ENCODE measurements at regions of chr17 and their contacts with region 1.

Region 1: GRCh38 chr17:80124351-80124981 is 22.5 kb downstream of the EIF4A3 start:
- DNase-seq: peak; percentile 62 to 74
- H3K4me3 ChIP-seq: no peak overlapping the region
- H3K4me3 Mint-ChIP-seq: no peak overlapping the region
- H3K27ac Mint-ChIP-seq: no peak overlapping the region
- H3K4me1 ChIP-seq: 0 out of 2 replicates have a peak, but pooled peaks cover 4% of the 10 kb centered on the region
- H3K4me1 Mint-ChIP-seq: peaks cover 7% of the 10 kb centered on the region
- H3K27me3 ChIP-seq: no peaks in the 10 kb centered on the region
- H3K27me3 Mint-ChIP-seq: no peaks in the 10 kb centered on the region
- CTCF ChIP-seq: peak; percentile 59 to 88

Region 2: DNA sequence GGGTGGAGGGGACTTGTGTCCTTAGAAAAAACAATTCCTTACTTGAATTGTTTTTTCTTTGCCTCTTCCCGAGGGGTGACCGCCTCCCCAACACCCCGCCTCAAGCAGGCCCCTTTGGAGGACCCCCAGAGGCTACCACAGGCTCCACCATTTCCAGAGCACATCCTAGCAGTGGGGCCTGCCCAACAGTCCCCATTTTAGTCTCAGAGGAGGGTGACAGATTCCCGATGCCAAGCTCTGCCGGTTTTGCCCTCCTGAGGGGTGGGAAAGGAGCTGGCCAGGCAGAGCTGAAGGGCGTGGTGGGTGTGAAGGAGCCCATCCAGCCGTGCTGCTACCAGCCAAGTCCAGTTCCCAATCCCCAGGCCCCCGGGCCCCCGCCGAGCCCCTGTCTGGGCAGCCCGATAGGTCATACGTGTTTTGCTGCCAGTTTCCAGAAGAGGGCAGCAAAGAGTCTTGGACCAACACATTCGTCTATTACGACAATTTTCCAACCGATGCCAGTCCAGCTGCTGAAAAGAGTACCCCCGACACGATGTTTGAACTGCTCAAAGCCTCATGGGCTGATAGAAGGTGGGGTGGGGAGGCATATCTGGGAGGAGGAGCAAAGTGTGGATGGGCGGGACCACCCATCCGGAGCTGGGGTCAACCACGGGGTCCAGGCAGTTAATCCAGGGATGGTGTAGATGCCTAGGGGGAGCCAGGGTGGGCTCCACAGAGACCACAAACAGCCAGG is 41.9 kb before region 1 on chr17:
- CTCF ChIA-PET with region 1: interaction called, 25 read pairs
- POLR2A ChIA-PET with region 1: no interaction called
- intact Hi-C with region 1: loop called (anchors 1 kb)
- DNase-seq: peak; percentile 74 to 82
- H3K4me3 ChIP-seq: no peak overlapping the region
- H3K4me3 Mint-ChIP-seq: no peak overlapping the region
- H3K27ac Mint-ChIP-seq: no peak overlapping the region
- H3K4me1 ChIP-seq: no peaks in the 10 kb centered on the region
- H3K4me1 Mint-ChIP-seq: peaks cover 9% of the 10 kb centered on the region
- H3K27me3 ChIP-seq: no peaks in the 10 kb centered on the region
- H3K27me3 Mint-ChIP-seq: peaks cover 3% of the 10 kb centered on the region
- CTCF ChIP-seq: peak; percentile 80 to 89

Region 3: GRCh38 chr17:80101011-80101945 is 23.2 kb before region 1 on chr17 and contains the start of gene GAA:
- CTCF ChIA-PET with region 1: interaction called, 37 read pairs
- POLR2A ChIA-PET with region 1: interaction called, 7 read pairs
- intact Hi-C with region 1: loop called (anchors 1 kb)
- DNase-seq: peak; percentile 80 to 95
- H3K4me3 ChIP-seq: peak within 1 kb of the TSS; percentile 97
- H3K4me3 Mint-ChIP-seq: peak within 1 kb of the TSS; percentile 86
- H3K27ac Mint-ChIP-seq: peak within 1 kb of the TSS; percentile 81
- H3K4me1 ChIP-seq: peaks cover 9% of the 10 kb centered on the region
- H3K4me1 Mint-ChIP-seq: peaks cover 6% of the 10 kb centered on the region
- H3K27me3 ChIP-seq: no peaks in the 10 kb centered on the region; the same call in 1 of the 2 replicates
- H3K27me3 Mint-ChIP-seq: no peaks in the 10 kb centered on the region
- CTCF ChIP-seq: peak; percentile 64 to 94
- total RNA-seq, gene GAA: 42.4 and 44.6 TPM in 2 replicates